ENCODE measurements at regions of chr22 and their contacts with region 1.

Region 1: DNA sequence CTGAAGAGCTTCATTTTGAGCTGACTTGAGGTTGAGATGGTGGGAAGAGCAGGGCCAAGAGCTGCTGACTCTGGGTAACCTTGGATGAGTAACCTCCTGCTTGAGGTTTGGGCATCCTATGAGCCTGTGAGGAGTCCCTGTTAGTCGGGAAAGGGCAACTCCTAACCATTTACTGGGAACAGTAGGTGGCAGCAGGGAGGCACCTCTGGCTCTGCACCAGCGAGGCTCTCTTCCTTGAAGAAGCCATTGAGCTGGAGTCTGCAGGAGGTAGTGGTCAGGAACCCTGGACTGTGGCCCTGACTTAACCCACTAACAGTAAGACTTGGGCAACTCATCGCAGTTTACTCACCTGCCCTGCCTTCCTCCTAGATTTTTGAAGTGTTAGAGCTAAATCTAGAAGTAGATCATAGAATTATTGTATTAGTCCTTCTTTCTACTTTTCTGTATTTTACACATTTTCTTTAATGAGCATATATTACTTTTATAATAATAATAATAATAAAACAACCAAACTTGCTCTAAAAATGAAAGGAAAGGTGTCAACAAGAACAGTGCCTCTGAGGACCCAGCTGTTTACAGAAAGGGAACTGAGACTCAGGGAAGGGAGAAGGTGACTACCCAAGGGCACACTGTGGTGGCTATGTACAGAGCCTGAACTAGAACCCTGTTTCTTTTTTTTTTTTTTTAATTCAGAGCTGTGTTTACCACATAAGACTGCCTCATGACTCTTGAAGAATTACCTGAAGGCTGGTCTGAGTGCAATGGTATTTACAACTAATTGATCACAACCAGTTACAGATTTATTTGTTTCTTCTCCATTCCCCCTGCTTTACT is 47.5 kb downstream of the MEI1 start:
- DNase-seq: peak; percentile 61 to 78
- ATAC-seq: peak; percentile 99 to 100
- H3K4me3 ChIP-seq: no peak overlapping the region
- H3K27ac ChIP-seq: no peak overlapping the region
- H3K4me1 ChIP-seq: 0 out of 3 replicates have a peak, but pooled peaks cover 2% of the 10 kb centered on the region
- CTCF ChIP-seq: peak; percentile 67
- EP300 ChIP-seq: no peak
- POLR2A ChIP-seq: no peak
- RAD21 ChIP-seq: peak; percentile 63 to 74

Region 2: GRCh38 chr22:41732096-41732772 is 14.6 kb before region 1 on chr22:
- CTCF ChIA-PET with region 1: interaction called, 17 read pairs
- POLR2A ChIA-PET with region 1: no interaction called
- DNase-seq: no peak
- ATAC-seq: no peak
- H3K4me3 ChIP-seq: no peak overlapping the region
- H3K27ac ChIP-seq: no peak overlapping the region
- H3K4me1 ChIP-seq: no peaks in the 10 kb centered on the region
- CTCF ChIP-seq: no peak
- EP300 ChIP-seq: no peak
- POLR2A ChIP-seq: no peak
- RAD21 ChIP-seq: no peak

Region 3: DNA sequence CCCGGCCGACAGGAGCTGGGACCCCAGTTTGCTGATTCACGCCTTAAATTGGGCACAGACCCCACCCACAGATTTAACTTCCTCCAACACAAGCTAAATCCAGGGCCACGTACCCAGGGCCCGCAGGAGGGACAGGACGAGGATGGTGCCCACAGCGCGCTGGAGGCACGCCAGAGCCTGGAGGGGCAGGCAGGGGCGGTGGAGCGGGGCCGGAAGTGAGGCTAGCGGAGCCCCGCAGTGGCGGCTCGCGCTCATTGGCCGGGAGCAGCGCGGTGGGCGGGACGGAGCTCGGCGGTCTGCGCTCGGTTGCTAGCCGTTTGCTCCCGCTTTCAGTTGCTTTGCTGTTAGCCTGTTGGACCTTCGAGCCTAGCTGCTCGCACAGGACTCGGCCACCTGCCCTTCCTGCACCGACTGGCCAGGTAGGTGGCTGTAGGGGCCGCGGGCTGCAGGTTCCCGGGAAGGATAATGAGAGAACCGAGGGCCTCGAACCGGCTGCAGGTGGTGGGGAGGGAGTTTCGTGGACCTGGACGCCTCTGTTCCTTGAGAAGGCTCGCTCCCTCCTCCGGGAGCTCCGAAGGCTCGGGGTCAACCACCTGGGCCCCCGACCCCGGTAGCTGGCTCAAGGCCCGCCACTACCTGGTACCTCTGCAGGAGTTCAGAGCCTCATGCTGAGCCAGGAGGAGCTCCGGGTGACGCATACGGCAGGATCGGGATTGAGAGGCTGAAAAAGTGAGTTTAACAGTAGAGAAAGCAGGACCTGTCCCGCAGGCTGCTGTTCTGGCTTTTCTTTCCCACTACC is 53.8 kb after region 1 on chr22 and contains the start of gene CCDC134:
- CTCF ChIA-PET with region 1: interaction called, 18 read pairs
- POLR2A ChIA-PET with region 1: no interaction called
- DNase-seq: peak; percentile 61 to 82
- ATAC-seq: peak; percentile 99 to 100
- H3K4me3 ChIP-seq: peak within 1 kb of the TSS; percentile 87
- H3K27ac ChIP-seq: peak within 1 kb of the TSS; percentile 92 to 93
- H3K4me1 ChIP-seq: peaks cover 12% of the 10 kb centered on the region; the same call in 2 of the 3 replicates
- CTCF ChIP-seq: no peak
- EP300 ChIP-seq: no peak
- POLR2A ChIP-seq: peak; percentile 84
- RAD21 ChIP-seq: no peak
- polyA plus RNA-seq, gene CCDC134: 2.5 and 3.6 TPM in 2 replicates

Region 4: DNA sequence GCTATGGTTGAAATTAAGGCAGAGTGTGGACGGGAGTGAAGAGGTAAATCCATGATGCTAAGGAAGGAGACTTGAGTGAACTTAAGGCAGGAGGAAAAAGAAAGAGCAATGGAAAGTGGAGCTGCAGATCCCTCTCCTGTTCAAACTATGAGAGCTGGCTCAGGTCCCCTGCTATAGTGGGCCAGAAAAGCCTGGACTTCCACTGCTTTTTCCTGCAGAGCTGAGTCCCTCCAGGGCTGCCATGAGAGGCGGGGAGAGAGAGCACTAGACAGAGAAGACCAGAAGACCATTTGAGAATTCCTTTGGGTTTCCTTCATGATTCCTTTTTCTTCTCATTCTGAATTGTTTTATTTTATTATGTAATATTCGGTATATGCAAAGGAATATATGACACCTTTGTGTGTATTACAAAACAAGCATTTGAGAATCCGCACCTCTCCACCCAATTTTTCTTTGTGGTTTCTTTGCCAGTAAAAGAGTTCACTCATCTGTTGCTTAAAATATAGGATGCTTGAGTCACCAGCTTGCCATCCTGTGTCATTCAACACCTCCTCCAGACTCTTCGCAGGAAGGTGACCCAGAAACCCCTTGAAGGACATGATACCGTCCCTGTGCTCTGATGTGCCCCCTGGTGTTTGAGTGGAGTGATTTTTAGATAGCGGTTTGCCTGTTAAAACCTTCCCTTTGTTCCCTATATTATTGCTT is 110.5 kb after region 1 on chr22:
- CTCF ChIA-PET with region 1: interaction called, 11 read pairs
- POLR2A ChIA-PET with region 1: no interaction called
- DNase-seq: peak; percentile 68 to 71
- ATAC-seq: peak; percentile 84 to 87
- H3K4me3 ChIP-seq: no peak overlapping the region
- H3K27ac ChIP-seq: peak overlapping the region in 1 of 2 experiments; percentile 55; a peak in 2 of 6 replicates
- H3K4me1 ChIP-seq: peaks cover 49% of the 10 kb centered on the region
- CTCF ChIP-seq: peak; percentile 59
- EP300 ChIP-seq: no peak
- POLR2A ChIP-seq: no peak
- RAD21 ChIP-seq: peak; percentile 46 to 49; a peak in 4 of 5 replicates

Region 5: DNA sequence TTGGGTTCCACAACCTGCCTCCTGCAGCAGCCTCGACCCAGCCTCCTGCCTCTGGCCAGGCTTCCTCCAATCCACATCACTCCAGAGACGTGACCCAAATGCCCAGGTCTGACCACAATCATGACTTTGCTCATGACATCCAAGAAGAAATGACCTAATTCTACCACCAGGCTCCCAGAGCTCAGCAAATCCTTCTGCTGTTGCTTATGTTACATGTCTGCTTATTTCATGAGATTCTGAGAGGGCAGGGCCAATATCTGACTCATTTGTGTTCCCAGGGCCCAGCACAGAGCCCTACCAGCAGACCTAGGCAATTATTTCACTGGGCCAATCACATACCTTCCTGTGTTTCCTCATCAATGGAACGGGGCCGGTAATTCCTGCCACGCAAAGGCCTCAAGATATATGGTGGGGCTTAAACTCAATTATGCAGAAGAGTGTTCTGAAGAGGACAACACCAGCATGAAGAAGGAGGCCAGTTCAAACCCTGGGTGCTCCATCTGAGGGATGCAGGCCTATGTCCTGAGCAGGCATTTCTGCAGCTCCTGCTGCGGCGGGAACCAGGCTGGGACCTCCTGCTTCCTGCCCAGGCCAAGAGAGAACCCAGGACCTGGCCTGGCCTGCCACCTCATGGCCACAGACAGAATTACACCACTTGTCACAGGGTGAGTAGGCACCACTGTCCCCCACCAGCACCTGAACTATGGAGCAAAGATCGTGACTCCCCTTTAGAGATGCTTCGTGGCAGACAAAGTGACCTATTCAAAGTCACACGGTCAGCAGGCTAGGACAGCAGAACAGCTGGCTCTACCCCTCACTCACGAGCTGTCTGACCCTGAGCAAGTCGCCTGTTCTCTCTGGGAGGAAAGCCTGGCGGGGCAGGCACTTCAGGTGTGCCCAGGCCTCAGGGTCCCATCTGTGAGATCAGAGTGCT is 194.3 kb after region 1 on chr22:
- CTCF ChIA-PET with region 1: interaction called, 24 read pairs
- POLR2A ChIA-PET with region 1: no interaction called
- DNase-seq: peak; percentile 59 to 74
- ATAC-seq: peak; percentile 87 to 93
- H3K4me3 ChIP-seq: no peak overlapping the region
- H3K27ac ChIP-seq: peak overlapping the region in 1 of 2 experiments; percentile 49; a peak in 1 of 6 replicates
- H3K4me1 ChIP-seq: peaks cover 17% of the 10 kb centered on the region; the same call in 2 of the 3 replicates
- CTCF ChIP-seq: peak; percentile 70
- EP300 ChIP-seq: no peak
- POLR2A ChIP-seq: no peak
- RAD21 ChIP-seq: peak; percentile 75 to 82

Measured in A549 (cell line).